H1 (cell line): ENCODE measurements at regions of chr12 and their contacts with region 1.

Region 1: GRCh38 chr12:102702447-102703114 is 214.5 kb downstream of the PAH start:
- DNase-seq: peak in 1 of 2 experiments; percentile 65
- H3K4me3 ChIP-seq: no peak overlapping the region
- H3K27ac ChIP-seq: no peak overlapping the region
- H3K4me1 ChIP-seq: no peaks in the 10 kb centered on the region
- H3K27me3 ChIP-seq: no peaks in the 10 kb centered on the region
- CTCF ChIP-seq: peak in 2 of 3 experiments; percentile 58 to 61; a peak in 3 of 4 replicates
- EP300 ChIP-seq: no peak
- POLR2A ChIP-seq: no peak
- RAD21 ChIP-seq: peak; percentile 58 to 65

Region 2: DNA sequence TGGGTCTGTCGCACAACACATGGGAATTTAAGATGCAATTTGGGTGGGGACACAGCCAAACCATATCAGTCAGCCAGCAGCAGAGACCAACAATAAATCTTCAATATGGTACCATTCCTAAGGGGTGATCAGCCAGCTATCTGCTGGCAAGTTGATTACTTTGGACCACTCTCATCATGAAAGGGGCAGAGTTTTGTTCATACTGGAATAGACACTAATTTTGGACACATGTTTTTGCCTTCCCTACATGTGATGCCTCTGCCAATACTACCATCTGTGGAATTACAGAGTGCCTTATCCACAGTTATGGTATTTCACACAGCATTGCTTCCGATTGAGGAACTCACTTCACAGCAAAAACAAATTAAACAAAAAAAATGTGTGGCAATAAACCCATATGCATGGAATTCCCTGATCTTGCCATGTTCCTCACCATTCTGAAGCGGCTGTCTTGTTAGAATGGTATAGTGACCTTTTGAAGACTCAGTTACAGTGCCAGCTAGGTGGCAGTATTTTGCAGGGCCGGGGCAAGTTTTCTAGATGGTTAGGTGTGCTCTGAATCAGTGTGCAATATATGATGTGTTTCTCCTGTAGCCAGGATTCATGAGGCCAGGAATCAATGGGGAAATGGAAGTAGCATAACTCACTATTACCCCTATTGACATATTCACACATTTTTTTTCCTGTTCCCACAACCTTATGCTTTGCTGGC is 43.2 kb before region 1 on chr12:
- CTCF ChIA-PET with region 1: interaction called, 14 read pairs
- POLR2A ChIA-PET with region 1: no interaction called
- DNase-seq: no peak
- H3K4me3 ChIP-seq: no peak overlapping the region
- H3K27ac ChIP-seq: no peak overlapping the region
- H3K4me1 ChIP-seq: no peaks in the 10 kb centered on the region
- H3K27me3 ChIP-seq: no peaks in the 10 kb centered on the region
- CTCF ChIP-seq: peak in 2 of 3 experiments; percentile 19 to 47; a peak in 2 of 4 replicates
- EP300 ChIP-seq: no peak
- POLR2A ChIP-seq: no peak
- RAD21 ChIP-seq: peak; percentile 35 to 51

Region 3: DNA sequence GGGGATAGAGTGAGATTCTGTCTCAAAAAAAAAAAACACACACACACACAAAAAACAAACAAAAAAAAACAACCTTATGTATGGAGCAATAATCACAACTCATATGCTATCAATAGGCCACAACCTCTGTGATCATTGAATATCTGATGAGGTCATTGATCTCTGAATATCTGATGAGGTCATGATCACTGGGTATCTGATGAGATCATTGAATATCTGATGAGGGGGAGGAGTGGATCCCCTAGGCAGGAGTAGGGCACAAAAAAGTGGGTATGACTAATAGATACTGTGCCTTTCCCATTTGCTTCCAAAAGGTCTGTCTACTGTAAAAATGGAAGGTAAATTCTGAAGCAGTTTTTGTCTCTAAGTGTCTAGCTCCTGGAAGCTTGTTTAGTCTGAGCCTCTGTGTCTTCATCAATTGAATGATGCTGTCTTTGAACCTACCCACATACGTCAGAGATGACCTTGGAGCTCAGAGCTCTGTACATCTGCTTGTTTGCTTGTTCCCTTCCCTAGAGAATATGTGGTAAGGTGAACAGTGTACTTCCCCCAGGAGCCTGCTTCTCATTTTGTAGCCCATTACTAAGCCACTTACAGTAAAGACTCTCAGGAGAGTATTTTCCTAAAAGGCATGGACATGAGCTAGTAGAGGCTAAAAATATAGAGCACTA is 200.9 kb after region 1 on chr12:
- CTCF ChIA-PET with region 1: no interaction called
- POLR2A ChIA-PET with region 1: no interaction called
- DNase-seq: no peak
- H3K4me3 ChIP-seq: no peak overlapping the region
- H3K27ac ChIP-seq: no peak overlapping the region
- H3K4me1 ChIP-seq: no peaks in the 10 kb centered on the region
- H3K27me3 ChIP-seq: no peaks in the 10 kb centered on the region
- CTCF ChIP-seq: no peak
- EP300 ChIP-seq: no peak
- POLR2A ChIP-seq: no peak
- RAD21 ChIP-seq: no peak

Region 4: GRCh38 chr12:102939670-102940222 is 237.2 kb after region 1 on chr12:
- CTCF ChIA-PET with region 1: no interaction called
- POLR2A ChIA-PET with region 1: no interaction called
- DNase-seq: no peak
- H3K4me3 ChIP-seq: no peak overlapping the region
- H3K27ac ChIP-seq: no peak overlapping the region
- H3K4me1 ChIP-seq: no peaks in the 10 kb centered on the region; a peak in 1 of 7 replicates
- H3K27me3 ChIP-seq: no peaks in the 10 kb centered on the region
- CTCF ChIP-seq: peak in 2 of 3 experiments; percentile 44 to 59; a peak in 3 of 4 replicates
- EP300 ChIP-seq: no peak
- POLR2A ChIP-seq: no peak
- RAD21 ChIP-seq: peak; percentile 77